ENCODE measurements at regions of chr14 and their contacts with region 1.

Region 1: DNA sequence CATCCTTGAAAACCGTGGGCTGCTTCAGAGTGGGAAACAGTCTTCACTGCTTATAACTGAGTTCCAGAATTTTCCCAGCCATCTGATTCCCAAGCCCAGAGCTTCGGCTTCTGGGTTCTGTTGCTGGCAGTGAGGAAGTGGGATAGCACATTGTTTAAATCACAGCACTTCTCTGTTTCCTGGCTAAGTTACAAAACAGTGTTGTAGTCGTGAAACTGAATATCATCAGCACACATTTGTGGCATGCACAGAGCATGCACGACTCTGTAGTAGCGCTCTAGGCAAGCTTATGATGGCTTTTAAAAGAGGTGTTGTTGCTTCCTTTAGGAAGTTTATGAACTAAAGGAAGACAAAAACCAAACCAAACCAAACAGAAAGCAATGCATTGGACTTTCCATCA is 1005.5 kb downstream of the NRXN3 start:
- DNase-seq: no peak

Region 2: DNA sequence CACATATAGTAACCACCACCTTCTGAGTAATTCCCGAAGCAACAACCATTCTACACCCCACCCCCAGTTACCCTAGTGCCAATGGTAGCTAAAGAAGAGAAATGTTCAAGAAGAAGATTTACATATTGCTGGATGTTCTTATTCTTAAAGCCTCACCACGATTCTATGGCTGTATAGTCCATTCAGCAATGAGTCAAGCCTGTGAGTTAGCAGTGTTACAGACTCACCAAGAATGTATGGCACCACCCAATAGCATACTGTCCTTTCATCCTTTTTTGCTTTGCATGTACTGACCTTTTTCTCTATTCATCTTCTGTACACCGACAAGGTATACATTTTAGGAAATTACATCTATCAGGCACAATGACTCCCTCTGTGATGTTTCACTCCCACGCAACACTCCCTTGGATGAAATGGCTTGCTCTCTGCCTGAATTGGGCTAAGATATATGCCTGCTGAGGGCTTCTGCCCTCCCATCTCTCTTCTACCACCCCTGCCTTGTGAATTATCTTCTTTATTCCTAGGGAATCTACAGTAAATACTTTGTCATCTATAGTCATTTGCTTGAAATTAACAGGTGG is 89.8 kb after region 1 on chr14:
- CTCF ChIA-PET with region 1: interaction called, 12 read pairs
- POLR2A ChIA-PET with region 1: no interaction called
- DNase-seq: no peak